Mucosa of descending colon (tissue), 3 donors: ENCODE measurements at regions of chr12 and their contacts with region 1.

Region 1: GRCh38 chr12:18139989-18140596 is 50.1 kb upstream of the RERGL start:
- DNase-seq: no peak
- ATAC-seq: peak; percentile 38
- H3K4me3 ChIP-seq: no peak overlapping the region
- H3K4me1 ChIP-seq: peaks cover 7% of the 10 kb centered on the region
- CTCF ChIP-seq: peak; percentile 24

Region 2: DNA sequence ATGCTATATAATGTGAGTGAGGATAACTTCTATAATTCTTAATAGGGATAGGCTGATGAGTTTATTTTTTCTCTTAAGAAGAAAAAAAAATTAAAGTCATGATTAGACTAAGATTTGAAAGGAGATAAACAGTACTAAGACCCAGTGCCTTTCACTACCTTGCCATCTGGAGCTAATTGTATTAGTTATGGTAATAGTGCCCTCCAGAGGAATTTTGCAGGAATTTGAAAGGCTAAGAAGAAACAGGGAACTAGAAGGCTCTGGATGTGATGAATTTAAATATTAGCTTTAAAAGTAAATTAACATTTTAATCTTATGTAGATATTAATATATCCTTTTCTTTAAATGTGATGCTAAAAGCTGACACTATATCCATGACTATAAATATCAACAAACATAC is 84.7 kb after region 1 on chr12:
- intact Hi-C with region 1: loop called in 1 of 2 experiments (anchors 5 kb)
- DNase-seq: no peak
- ATAC-seq: no peak
- H3K4me3 ChIP-seq: no peak overlapping the region
- H3K4me1 ChIP-seq: no peaks in the 10 kb centered on the region
- CTCF ChIP-seq: no peak

Region 3: GRCh38 chr12:18422871-18423270 is 282.8 kb after region 1 on chr12:
- intact Hi-C with region 1: no loop called
- DNase-seq: no peak
- ATAC-seq: no peak
- H3K4me3 ChIP-seq: no peak overlapping the region
- H3K4me1 ChIP-seq: no peaks in the 10 kb centered on the region
- CTCF ChIP-seq: no peak